ENCODE measurements at regions of chr16 and their contacts with region 1.

Region 1: GRCh38 chr16:68790130-68790761 is 53.1 kb upstream of the TANGO6 start:
- DNase-seq: peak in 2 of 6 donors; percentile 43 to 51
- ATAC-seq: peak; percentile 15 to 47 (median 37)
- H3K4me3 ChIP-seq: no peak overlapping the region
- H3K27ac ChIP-seq: peak overlapping the region; percentile 43 to 84 (median 72)
- H3K4me1 ChIP-seq: peaks cover 70 to 83% (median 70%) of the 10 kb centered on the region in 3 donors
- H3K27me3 ChIP-seq: no peaks in the 10 kb centered on the region
- CTCF ChIP-seq: no peak

Region 2: DNA sequence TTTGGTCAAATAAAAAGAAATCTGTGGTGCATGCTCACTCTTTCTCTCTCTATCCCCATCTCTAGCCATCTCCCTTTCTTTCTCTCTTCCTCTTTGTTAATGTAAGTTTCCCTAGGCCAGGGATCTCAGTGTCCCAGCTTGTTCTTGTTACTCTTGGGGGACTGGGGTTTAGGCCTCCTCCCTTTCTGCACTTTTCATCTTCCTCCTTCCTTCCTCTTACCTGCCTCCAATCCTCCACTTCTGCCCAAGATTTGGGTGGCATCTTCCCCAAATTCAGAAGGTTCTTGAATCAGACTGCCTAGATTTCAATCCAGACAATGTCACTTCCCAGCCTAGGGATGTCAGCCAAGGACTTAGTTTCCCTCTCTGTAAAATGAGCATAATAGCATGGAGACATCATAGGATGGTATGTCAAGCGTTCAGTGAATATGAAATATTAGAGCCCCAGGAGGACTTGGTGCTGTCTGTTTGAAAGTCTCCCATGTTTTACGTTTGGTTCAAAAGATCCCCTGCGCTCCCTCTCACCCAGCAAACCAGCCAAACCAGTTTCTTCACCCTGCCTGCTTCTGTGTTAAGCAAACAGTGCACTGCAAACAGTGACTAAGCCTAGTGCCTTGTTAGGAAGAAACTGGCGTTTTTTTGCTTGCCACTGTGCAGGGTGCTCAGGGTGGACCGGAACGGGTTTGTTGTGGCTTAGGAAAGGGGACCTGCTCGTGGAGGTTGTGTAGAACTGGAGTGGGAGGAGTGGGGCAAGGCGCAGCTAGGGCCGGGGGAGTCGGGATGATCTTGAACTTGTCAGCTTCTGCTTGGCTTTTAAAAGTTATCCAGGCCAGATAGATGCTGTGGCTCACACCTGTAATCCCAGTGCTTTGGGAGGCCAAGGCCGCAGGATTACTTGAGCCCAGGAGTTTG is 45.6 kb before region 1 on chr16:
- intact Hi-C with region 1: loop called in 2 of 3 experiments (anchors 5 kb)
- DNase-seq: peak; percentile 63 to 94 (median 84)
- ATAC-seq: peak; percentile 73 to 90 (median 84)
- H3K4me3 ChIP-seq: peak overlapping the region in 2 of 4 donors; percentile 4 to 17
- H3K27ac ChIP-seq: peak overlapping the region; percentile 64 to 95 (median 92)
- H3K4me1 ChIP-seq: peaks cover 77 to 83% (median 81%) of the 10 kb centered on the region in 3 donors
- H3K27me3 ChIP-seq: no peaks in the 10 kb centered on the region
- CTCF ChIP-seq: no peak

Region 3: GRCh38 chr16:68843482-68844210 is 53.4 kb after region 1 on chr16 and contains the start of gene TANGO6:
- intact Hi-C with region 1: no loop called
- DNase-seq: peak; percentile 78 to 94 (median 90)
- ATAC-seq: peak; percentile 95 to 98 (median 96)
- H3K4me3 ChIP-seq: peak within 1 kb of the TSS; percentile 67 to 97 (median 91)
- H3K27ac ChIP-seq: peak within 1 kb of the TSS; percentile 36 to 72 (median 64)
- H3K4me1 ChIP-seq: no peaks in the 10 kb centered on the region
- H3K27me3 ChIP-seq: no peaks in the 10 kb centered on the region
- CTCF ChIP-seq: no peak
- total RNA-seq, gene TANGO6: 6.1 to 9.3 (median 6.6) TPM

Measured in pancreas (tissue), 10 donors.